Posterior cingulate gyrus (tissue), 11 donors: ENCODE measurements at regions of chr12 and their contacts with region 1.

Region 1: DNA sequence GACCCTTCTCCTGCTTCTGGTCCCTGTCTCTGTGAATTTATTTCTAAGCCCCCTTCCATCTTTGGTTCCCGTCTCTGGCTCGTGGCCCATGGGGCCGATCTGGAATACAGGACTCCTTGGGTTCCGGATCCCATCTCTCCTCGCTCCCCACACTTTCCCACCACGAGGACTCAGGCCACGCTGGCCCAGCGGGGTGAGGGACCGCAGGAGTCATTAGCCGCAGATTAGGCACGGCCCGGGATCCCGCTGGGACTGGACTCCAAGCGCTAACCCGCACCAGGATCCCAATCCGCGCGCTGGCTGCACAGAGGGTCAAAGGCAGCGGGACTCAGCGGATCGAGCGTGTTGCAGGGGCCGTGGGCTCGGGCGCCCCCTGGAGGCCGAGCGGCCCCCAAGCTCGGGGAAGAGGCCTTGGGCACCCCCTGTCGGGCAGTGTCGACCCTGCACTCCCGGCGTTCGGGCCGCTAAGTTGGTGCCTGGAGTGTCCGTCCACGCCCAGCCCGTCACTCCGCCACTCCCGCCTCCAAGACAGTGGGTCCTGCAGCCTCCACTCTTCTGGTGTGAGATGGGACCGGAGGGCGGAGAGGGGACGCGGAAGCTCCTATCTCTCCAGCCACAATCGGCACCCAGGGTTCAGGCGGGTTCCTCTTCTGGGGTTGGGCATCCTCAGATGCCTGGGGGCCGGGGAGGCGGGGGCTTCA is 9.5 kb downstream of the SHMT2 start:
- DNase-seq: peak; percentile 79 to 98 (median 88)

Region 2: GRCh38 chr12:57213058-57213715 is 25.8 kb before region 1 on chr12:
- intact Hi-C with region 1: loop called (anchors 1 kb)
- DNase-seq: peak; percentile 84 to 98 (median 89)